ENCODE measurements at regions of chr1 and their contacts with region 1.

Region 1: DNA sequence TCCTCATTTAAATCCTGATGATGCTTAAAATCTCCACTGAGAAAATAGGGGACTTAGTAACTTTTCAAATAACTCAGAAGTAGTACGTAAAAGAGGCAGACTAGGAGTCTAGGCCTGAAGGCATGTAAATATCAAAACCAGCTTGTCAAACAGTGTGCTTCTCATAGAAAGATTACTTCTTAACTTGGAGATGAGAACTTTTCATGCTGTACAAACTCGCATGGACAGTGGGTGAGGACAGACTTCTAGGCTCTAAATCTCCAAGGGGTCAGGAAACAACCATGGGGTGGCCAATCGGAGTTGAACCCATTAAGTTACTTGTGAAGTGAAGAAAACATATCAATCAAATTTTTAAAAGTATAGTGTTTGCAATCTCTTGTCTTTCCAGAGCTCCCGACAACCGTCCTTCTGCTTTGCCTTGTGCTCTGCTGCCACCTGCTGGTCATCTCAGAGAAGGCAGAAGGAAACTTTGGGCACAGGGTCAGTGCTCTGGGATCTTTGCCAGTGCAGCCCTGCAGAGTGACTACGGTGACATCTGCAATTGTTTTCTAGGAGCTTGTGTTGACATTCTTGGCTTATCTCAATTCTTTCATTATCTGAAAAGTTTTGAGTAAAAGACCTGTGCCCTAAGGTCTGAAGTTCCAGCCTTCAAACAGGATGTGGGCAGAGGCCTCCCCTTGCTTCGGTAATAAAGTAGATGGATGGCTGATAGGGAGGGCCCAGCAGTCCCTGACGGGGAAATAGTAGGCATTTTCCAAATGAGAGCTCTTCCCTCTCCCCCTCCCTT is 105.1 kb upstream of the PDE4B start:
- DNase-seq: peak; percentile 91

Region 2: GRCh38 chr1:65235867-65236805 is 451.5 kb before region 1 on chr1:
- intact Hi-C with region 1: loop called (anchors 5 kb)
- DNase-seq: no peak

Region 3: GRCh38 chr1:65431111-65431705 is 256.4 kb before region 1 on chr1:
- intact Hi-C with region 1: loop called (anchors 2 kb)
- DNase-seq: no peak